ENCODE measurements at regions of chr6 and their contacts with region 1.

Region 1: GRCh38 chr6:25556516-25556915 is 95.5 kb upstream of the SCGN start:
- DNase-seq: peak; percentile 28
- ATAC-seq: peak; percentile 90
- H3K4me3 ChIP-seq: no peak overlapping the region
- H3K27ac ChIP-seq: no peak overlapping the region
- H3K4me1 ChIP-seq: no peaks in the 10 kb centered on the region
- H3K27me3 ChIP-seq: no peaks in the 10 kb centered on the region
- CTCF ChIP-seq: peak; percentile 80 to 83 (median 81)
- EP300 ChIP-seq: no peak
- POLR2A ChIP-seq: no peak
- RAD21 ChIP-seq: peak; percentile 60

Region 2: DNA sequence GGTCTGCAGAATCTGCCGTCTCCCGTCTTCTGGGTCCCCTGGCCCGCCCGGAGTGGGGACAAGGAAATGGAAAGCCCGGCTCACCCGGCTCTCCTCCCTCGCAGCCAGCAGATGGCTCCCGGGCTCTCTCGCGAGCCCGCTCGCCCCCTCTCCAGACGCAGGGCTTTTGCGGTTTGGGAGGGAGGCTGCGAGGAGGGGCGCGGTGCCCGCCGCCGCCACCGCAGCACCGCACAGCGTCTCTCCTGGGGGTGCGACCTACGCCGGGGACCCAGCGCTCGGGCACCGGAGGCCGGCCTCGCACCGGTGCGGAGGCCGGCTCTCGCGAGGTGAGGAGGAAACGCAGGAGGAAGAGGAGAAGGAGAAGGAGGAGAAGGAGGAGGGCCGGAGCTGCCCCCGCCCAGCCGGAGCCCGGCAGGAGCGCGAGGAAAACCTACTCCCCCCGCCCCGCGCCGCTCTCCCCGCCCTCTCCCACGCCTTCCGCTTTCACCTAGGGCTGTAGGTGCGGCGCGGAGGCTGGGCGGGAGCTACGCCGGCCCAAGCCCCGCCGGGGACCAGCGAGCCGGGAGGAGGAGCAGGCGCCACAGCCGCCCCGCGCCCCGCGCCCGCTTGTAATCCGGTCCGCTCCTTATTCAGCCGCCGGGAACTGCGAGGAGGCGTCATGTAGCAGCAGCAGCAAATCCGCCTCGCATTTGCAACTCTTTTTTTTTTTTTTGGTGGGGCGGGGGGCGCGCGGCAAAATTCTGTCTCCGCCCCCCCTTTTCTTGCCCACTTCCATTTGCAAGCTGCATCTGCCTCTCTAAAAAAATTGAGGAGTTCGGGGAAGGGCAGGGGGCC is 277.4 kb before region 1 on chr6 and contains the start of gene CARMIL1:
- CTCF ChIA-PET with region 1: interaction called, 38 read pairs
- POLR2A ChIA-PET with region 1: no interaction called
- RAD21 ChIA-PET with region 1: interaction called, 11 read pairs
- SMC1A ChIA-PET with region 1: interaction called, 28 read pairs
- in situ Hi-C with region 1: no loop called
- intact Hi-C with region 1: no loop called
- DNase-seq: no peak
- ATAC-seq: peak; percentile 88
- H3K4me3 ChIP-seq: peak within 1 kb of the TSS; percentile 92
- H3K27ac ChIP-seq: peak within 1 kb of the TSS; percentile 50
- H3K4me1 ChIP-seq: 0 out of 2 replicates have a peak, but pooled peaks cover 5% of the 10 kb centered on the region
- H3K27me3 ChIP-seq: no peaks in the 10 kb centered on the region
- CTCF ChIP-seq: peak; percentile 64 to 81 (median 75)
- EP300 ChIP-seq: no peak
- POLR2A ChIP-seq: no peak
- RAD21 ChIP-seq: peak; percentile 79
- polyA plus RNA-seq, gene CARMIL1: 9.4 to 11.3 TPM

Region 3: GRCh38 chr6:25329161-25329817 is 227.2 kb before region 1 on chr6:
- CTCF ChIA-PET with region 1: no interaction called
- POLR2A ChIA-PET with region 1: no interaction called
- RAD21 ChIA-PET with region 1: no interaction called
- SMC1A ChIA-PET with region 1: no interaction called
- in situ Hi-C with region 1: no loop called
- intact Hi-C with region 1: no loop called
- DNase-seq: no peak
- ATAC-seq: no peak
- H3K4me3 ChIP-seq: no peak overlapping the region
- H3K27ac ChIP-seq: no peak overlapping the region
- H3K4me1 ChIP-seq: peaks cover 7% of the 10 kb centered on the region
- H3K27me3 ChIP-seq: no peaks in the 10 kb centered on the region
- CTCF ChIP-seq: no peak
- EP300 ChIP-seq: no peak
- POLR2A ChIP-seq: no peak
- RAD21 ChIP-seq: no peak

Region 4: DNA sequence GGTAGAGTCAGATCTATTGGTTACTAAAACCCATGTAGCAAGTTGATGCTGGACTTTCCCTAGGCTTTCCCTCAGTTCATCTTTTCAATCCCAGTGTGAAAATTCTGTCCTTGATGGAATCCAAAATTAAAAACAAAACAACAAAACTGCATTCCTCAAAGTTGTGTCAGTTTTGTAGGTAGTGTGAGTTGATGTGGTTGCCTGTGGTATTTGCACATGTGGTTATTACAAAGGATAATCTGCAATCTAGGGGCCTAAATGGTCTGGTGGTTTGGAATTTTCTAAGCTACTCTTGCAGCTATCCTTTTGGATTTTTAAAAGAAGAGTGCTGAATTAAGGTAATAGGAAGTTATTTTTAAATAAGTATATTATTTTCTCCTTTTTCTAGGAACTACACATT is 36.7 kb before region 1 on chr6:
- CTCF ChIA-PET with region 1: interaction called, 11 read pairs
- POLR2A ChIA-PET with region 1: no interaction called
- RAD21 ChIA-PET with region 1: no interaction called
- SMC1A ChIA-PET with region 1: interaction called, 4 read pairs
- in situ Hi-C with region 1: no loop called
- intact Hi-C with region 1: no loop called
- DNase-seq: no peak
- ATAC-seq: no peak
- H3K4me3 ChIP-seq: no peak overlapping the region
- H3K27ac ChIP-seq: no peak overlapping the region
- H3K4me1 ChIP-seq: no peaks in the 10 kb centered on the region
- H3K27me3 ChIP-seq: no peaks in the 10 kb centered on the region
- CTCF ChIP-seq: no peak
- EP300 ChIP-seq: no peak
- POLR2A ChIP-seq: no peak
- RAD21 ChIP-seq: no peak

Region 5: DNA sequence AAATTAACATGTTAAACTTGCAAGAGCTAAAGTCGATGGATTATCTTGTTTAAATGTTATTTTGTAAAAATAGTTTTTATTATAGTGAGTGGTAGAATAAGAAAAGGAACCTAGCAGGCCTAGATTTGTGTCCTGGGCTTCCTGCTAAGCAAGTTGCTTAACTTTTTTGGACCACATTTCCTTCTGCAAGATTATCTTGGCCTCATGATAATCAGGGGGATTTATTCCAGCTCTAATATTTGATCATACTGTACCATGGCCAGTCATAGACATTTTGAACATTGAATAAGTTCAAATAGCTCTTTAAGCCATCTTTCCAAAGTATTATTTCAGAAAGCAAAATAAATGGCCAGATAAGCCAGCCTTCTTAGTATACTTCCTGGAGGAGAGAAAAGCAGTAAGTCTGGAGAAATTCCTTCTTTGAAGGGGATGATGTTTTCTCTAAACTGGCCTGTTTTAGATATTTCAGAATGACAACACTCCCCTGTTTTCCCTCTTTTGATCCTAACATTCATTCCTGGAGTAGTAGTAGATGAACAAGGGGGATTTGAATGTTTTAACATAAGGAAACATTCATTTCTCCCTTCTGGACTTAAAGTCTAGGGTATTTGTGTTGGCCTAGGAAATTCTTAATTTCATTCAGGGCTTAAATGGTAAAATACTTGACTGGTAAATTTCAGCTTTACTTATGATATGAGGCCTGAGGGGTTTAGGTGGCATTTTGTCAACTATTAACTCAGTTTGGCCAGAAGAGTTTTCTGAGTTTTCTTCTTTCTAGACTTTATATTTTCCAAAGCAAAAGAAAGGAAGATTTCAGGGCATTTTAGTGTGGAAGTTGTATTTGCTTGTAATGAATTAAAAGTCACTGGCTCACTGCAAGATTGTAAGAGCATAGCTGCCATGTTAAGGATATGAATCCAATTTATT is 13.3 kb before region 1 on chr6:
- CTCF ChIA-PET with region 1: interaction called, 14 read pairs
- POLR2A ChIA-PET with region 1: no interaction called
- RAD21 ChIA-PET with region 1: no interaction called
- SMC1A ChIA-PET with region 1: interaction called, 9 read pairs
- in situ Hi-C with region 1: no loop called
- intact Hi-C with region 1: no loop called
- DNase-seq: no peak
- ATAC-seq: no peak
- H3K4me3 ChIP-seq: no peak overlapping the region
- H3K27ac ChIP-seq: no peak overlapping the region
- H3K4me1 ChIP-seq: no peaks in the 10 kb centered on the region
- H3K27me3 ChIP-seq: no peaks in the 10 kb centered on the region
- CTCF ChIP-seq: no peak
- EP300 ChIP-seq: no peak
- POLR2A ChIP-seq: no peak
- RAD21 ChIP-seq: no peak

Region 6: DNA sequence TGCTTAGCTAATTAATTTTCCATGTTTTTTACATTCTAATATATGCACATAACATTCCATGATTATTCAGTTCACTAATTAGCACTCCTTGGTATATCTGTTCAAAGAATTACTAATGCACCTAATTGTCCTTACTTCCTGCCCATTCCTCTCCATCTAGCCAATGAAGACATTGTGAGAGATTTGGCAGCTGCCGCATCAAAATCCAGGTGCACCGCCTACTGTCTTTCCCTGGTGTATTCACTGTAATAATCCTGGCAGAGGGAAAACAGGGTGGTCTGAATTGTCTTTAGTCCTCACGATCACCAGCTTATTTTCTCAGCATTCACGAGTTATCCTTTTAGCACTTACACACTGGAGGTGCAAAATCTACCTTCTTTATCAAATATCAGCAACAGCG is 34.5 kb after region 1 on chr6:
- CTCF ChIA-PET with region 1: interaction called, 13 read pairs
- POLR2A ChIA-PET with region 1: no interaction called
- RAD21 ChIA-PET with region 1: interaction called, 4 read pairs
- SMC1A ChIA-PET with region 1: interaction called, 4 read pairs
- in situ Hi-C with region 1: no loop called
- intact Hi-C with region 1: no loop called
- DNase-seq: no peak
- ATAC-seq: no peak
- H3K4me3 ChIP-seq: no peak overlapping the region
- H3K27ac ChIP-seq: no peak overlapping the region
- H3K4me1 ChIP-seq: no peaks in the 10 kb centered on the region
- H3K27me3 ChIP-seq: no peaks in the 10 kb centered on the region
- CTCF ChIP-seq: no peak
- EP300 ChIP-seq: no peak
- POLR2A ChIP-seq: no peak
- RAD21 ChIP-seq: no peak

Region 7: GRCh38 chr6:25617997-25618396 is 61.5 kb after region 1 on chr6:
- CTCF ChIA-PET with region 1: interaction called, 12 read pairs
- POLR2A ChIA-PET with region 1: no interaction called
- RAD21 ChIA-PET with region 1: no interaction called
- SMC1A ChIA-PET with region 1: no interaction called
- in situ Hi-C with region 1: no loop called
- intact Hi-C with region 1: no loop called
- DNase-seq: no peak
- ATAC-seq: peak; percentile 84
- H3K4me3 ChIP-seq: no peak overlapping the region
- H3K27ac ChIP-seq: no peak overlapping the region
- H3K4me1 ChIP-seq: no peaks in the 10 kb centered on the region
- H3K27me3 ChIP-seq: no peaks in the 10 kb centered on the region
- CTCF ChIP-seq: no peak
- EP300 ChIP-seq: 0 out of 4 replicates have a peak, but pooled peaks of 1 of the 2 experiments have one; percentile 53
- POLR2A ChIP-seq: no peak
- RAD21 ChIP-seq: no peak